ENCODE measurements at regions of chr7 and their contacts with region 1.

Region 1: DNA sequence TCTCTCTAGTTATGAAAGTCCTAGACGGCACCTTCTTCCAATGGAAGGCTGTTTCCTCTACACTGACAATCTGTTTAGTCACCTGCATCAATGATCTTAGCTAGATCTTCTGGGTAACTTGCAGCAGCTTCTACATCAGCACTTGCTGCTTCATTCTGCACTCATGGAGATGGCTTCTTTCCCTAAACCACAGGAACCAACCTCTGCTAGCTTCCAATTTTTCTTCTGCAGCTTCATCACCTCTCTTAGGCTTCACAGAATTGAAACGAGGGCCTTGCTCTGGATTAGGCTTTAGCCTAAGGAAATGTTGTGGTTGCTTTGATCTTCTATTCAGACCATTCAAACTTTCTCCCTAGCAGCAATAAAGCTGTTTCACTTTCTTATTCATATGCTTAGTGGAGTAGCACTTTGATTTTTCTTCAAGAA is 24.6 kb downstream of the NAMPT start:
- DNase-seq: no peak
- H3K4me3 Mint-ChIP-seq: no peak overlapping the region
- H3K27ac Mint-ChIP-seq: peak overlapping the region; percentile 78
- H3K4me1 Mint-ChIP-seq: peaks cover 75% of the 10 kb centered on the region
- H3K27me3 Mint-ChIP-seq: no peaks in the 10 kb centered on the region

Region 2: DNA sequence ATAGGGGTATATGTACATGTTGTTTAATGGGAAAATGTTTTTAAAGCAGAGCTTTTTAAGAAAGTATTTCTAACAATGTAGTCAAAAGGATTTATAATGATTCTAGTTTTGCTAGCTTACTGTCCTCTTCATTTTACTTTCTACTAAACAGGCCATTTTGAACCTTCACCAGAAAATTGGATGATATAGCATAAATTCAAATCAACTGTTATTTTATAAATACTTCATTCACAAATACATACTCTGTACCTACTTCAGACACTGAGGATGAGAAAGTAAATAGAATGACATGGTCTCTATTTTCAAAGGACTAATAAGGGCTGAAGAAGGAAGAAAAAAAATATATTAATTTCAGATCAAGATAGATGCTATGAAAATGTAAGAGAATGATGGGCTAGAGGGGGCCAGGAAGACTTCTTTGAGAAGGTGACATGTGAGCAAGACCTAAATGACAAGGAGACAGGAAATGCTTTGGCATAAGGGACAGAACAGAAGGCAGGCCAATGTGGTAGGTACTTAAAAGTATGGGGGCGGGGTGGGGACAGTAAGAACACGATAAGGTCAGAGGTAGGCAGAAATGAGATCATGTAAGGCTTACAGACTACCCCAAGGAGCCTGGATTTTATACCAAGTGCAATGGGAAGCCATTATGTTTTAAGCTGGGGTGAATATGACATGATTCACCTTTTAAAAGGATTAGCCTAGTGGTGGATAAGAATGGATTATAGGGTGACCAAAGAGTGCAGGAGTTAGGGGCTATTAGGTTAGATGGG is 19.5 kb after region 1 on chr7:
- CTCF ChIA-PET with region 1: interaction called, 3 read pairs
- POLR2A ChIA-PET with region 1: interaction called, 4 read pairs
- intact Hi-C with region 1: loop called (anchors 1 kb)
- DNase-seq: peak; percentile 73
- H3K4me3 Mint-ChIP-seq: peak overlapping the region; percentile 90
- H3K27ac Mint-ChIP-seq: peak overlapping the region; percentile 98
- H3K4me1 Mint-ChIP-seq: peaks cover 54% of the 10 kb centered on the region
- H3K27me3 Mint-ChIP-seq: no peaks in the 10 kb centered on the region